Activated CD4-positive, alpha-beta T cell treated with anti-CD3 and anti-CD28 coated beads for 36 hours (primary cell): ENCODE measurements at regions of chr1 and their contacts with region 1.

Region 1: DNA sequence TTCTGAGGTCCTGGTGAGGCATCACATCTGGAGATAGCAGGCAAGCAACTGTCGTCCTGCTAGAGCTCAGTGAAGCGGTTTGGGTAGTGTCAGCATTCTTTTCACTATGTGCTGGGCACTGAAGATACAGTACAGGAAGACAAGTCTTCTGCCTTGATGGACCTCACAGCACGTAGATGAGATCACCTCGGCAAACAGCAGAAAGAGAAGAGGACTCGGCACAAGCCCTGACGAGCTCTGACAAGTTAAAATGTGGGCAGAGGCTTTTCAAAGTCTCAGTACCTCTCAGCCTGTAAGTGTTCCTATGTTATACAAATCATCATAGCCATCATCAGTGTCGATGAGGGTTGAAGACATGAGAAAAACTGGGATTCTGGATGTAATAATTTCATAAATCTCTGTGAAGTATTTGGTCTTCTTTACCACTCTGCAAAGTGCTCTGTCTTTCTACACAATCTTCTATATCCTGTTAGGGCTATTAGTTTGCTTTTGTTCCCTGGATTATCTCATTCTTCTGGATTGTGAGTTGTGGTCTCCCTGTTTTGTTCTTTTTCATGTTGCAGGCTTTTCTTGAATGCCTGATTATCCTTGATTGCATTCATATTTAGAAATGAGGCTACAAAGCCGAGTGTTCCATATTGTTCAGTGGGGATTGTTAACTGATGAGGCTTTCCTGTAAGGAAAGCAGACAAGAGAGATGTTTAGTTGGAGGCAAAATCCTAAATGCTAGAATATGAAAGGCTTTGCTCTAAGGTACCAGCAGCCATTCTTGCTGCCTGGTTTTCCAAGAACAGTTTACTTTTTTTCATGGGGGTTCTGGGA is 24.2 kb downstream of the MAEL start:
- DNase-seq: no peak
- ATAC-seq: no peak
- H3K4me3 Mint-ChIP-seq: no peak overlapping the region
- H3K27ac Mint-ChIP-seq: no peak overlapping the region
- H3K4me1 Mint-ChIP-seq: no peaks in the 10 kb centered on the region
- H3K27me3 Mint-ChIP-seq: peaks cover 22% of the 10 kb centered on the region

Region 2: DNA sequence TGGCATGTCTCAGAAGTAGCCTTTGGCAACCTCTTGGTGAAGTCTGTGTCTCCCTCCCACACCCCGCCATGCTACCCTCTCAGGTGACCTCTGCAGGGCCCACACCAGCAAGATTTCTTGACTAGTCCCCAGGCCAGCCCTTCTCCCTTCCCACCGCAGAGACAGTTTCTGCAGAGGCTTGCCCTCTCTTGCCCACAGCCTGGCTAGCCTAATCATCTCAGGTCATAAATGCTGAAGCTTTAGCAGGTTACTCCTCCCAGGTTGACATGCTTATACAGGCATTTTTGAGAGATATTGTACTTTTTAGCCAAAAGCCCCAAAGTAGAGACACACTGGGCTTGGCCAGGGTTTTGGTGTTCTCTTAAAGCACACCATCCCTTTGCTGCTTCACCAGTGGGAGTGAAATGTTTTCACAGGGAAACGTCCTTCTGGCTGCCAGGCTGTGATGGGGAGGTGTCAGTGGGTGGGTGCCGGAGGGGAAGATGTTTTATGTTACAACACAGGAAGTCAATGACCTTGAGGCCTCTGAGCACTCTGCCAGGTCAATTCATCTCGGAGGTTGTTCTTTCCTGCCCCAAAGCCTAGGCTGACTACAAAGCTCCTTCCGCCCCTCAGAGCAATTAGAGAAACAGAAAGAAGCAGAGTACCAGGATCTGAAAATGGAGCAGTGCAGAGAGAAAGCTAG is 139.0 kb after region 1 on chr1:
- CTCF ChIA-PET with region 1: no interaction called
- POLR2A ChIA-PET with region 1: no interaction called
- intact Hi-C with region 1: loop called in 1 of 2 experiments (anchors 5 kb)
- DNase-seq: peak; percentile 25
- ATAC-seq: peak; percentile 33
- H3K4me3 Mint-ChIP-seq: no peak overlapping the region
- H3K27ac Mint-ChIP-seq: no peak overlapping the region
- H3K4me1 Mint-ChIP-seq: peaks cover 4% of the 10 kb centered on the region
- H3K27me3 Mint-ChIP-seq: peaks cover 4% of the 10 kb centered on the region